ENCODE measurements at regions of chr7 and their contacts with region 1.

Region 1: DNA sequence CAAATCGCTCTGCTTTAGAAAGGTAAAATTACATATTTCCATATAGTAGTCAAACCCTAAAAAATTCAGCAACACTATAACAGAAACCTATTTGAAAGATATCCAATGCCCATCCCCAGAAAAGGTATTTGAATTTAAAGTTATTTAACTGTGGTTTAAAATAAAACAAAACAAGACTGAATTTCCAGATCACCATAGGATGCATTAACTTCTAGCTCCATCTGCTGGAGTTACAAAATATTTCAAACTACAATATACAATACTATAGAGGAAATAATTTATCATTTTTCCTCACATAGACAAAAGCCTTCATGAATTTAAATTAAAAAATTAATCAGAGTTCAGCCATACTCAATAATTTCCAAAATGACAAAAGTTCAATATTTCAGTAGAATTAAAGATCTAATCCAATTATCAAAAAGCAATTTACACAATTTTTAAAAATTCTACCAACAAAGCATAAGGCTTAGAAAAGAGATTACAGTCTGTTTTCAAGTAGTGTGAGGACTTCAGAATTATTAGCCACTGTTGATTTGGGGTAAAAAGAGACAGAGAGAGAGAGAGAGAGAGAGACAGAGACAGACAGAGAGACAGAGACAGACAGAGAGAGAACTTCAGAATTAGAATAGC is 75.9 kb downstream of the LMBR1 start:
- DNase-seq: peak; percentile 25
- H3K4me3 Mint-ChIP-seq: no peak overlapping the region
- H3K27ac Mint-ChIP-seq: no peak overlapping the region
- H3K4me1 Mint-ChIP-seq: peaks cover 3% of the 10 kb centered on the region
- H3K27me3 Mint-ChIP-seq: no peaks in the 10 kb centered on the region
- CTCF ChIP-seq: peak; percentile 48

Region 2: GRCh38 chr7:155796381-155797261 is 1020.4 kb before region 1 on chr7:
- CTCF ChIA-PET with region 1: interaction called, 4 read pairs
- POLR2A ChIA-PET with region 1: no interaction called
- intact Hi-C with region 1: loop called (anchors 1 kb)
- DNase-seq: peak; percentile 42
- H3K4me3 Mint-ChIP-seq: no peak overlapping the region
- H3K27ac Mint-ChIP-seq: no peak overlapping the region
- H3K4me1 Mint-ChIP-seq: no peaks in the 10 kb centered on the region
- H3K27me3 Mint-ChIP-seq: no peaks in the 10 kb centered on the region
- CTCF ChIP-seq: peak; percentile 98

Region 3: DNA sequence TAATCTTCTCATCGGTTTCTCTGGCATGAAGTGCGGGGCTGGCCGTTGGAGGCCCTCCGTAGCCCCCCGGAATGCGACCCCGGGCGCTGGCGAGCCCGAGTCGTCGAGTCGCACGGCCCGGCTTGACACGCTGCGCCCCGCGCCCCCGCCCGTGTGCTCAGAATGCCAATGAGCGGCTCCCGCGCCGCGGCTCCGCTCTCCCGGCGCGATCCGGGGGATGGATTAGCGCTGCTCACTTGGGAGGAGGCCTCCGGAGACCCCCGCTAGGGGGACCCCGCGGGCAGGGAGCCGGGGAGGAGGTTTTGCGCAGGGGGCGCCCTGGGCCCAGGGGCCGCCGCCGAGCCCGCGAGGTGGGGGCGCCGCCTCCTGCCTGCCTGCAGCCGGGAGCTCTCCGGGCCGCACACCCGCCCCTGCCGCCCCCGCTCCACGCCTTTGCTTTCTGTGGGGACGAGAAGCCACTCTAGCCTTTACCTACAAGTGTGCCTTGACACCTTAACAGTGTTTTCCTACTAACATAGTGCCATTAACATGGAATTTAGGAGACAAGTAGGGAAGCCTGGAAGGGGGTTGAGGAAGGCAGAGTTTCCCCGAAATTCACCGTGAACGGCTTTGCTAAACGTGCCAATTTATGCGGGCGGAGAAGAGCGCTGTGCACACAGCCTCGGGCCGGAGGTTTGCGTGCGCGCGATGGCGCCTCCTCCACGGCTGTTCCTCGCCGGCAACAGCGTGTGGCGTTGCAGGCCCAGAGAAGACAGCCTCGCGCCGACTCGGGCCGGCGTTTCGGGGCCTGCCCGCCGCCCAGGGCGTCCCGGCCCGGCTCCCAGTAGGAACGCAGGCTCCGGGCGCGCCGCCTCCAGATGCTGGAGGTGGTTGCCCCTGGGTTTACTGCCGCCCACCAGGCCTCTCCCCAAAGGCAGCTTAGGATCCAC is 1011.9 kb before region 1 on chr7:
- CTCF ChIA-PET with region 1: interaction called, 3 read pairs
- POLR2A ChIA-PET with region 1: no interaction called
- intact Hi-C with region 1: loop called (anchors 2 kb)
- DNase-seq: peak; percentile 55
- H3K4me3 Mint-ChIP-seq: peak overlapping the region; percentile 60
- H3K27ac Mint-ChIP-seq: no peak overlapping the region
- H3K4me1 Mint-ChIP-seq: peaks cover 5% of the 10 kb centered on the region
- H3K27me3 Mint-ChIP-seq: peaks cover 16% of the 10 kb centered on the region
- CTCF ChIP-seq: peak; percentile 57

Measured in MCF 10A (cell line).